Activated CD4-positive, alpha-beta T cell treated with anti-CD3 and anti-CD28 coated beads for 36 hours (primary cell): ENCODE measurements at regions of chr1 and their contacts with region 1.

Region 1: GRCh38 chr1:39196244-39197215 is 8.0 kb upstream of the MACF1 start:
- DNase-seq: peak; percentile 78
- ATAC-seq: peak; percentile 42
- H3K4me3 Mint-ChIP-seq: peak overlapping the region; percentile 54
- H3K27ac Mint-ChIP-seq: peak overlapping the region; percentile 87
- H3K4me1 Mint-ChIP-seq: peaks cover 84% of the 10 kb centered on the region
- H3K27me3 Mint-ChIP-seq: no peaks in the 10 kb centered on the region

Region 2: DNA sequence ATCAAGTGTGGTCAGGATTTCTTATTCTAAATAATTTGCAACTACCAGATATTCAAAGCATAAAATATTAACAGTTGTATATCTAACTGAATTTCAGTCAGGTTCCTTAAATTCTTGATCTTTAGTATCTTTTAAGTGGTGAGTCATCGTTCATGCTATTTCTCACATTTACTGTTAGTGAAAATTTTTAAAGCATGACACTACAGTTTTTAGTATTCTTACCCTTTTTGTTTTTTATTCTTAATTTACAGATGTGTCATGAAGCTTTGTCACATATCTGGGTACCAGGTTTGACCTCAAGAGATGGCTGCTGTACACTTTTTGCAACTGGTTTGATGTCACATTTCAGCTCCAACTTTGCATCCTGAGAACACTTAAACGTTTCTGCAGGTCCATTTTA is 192.7 kb before region 1 on chr1:
- CTCF ChIA-PET with region 1: no interaction called
- POLR2A ChIA-PET with region 1: no interaction called
- intact Hi-C with region 1: loop called in 1 of 2 experiments (anchors 2 kb)
- DNase-seq: no peak
- ATAC-seq: peak; percentile 69
- H3K4me3 Mint-ChIP-seq: no peak overlapping the region
- H3K27ac Mint-ChIP-seq: peak overlapping the region; percentile 57
- H3K4me1 Mint-ChIP-seq: peaks cover 44% of the 10 kb centered on the region
- H3K27me3 Mint-ChIP-seq: no peaks in the 10 kb centered on the region

Region 3: DNA sequence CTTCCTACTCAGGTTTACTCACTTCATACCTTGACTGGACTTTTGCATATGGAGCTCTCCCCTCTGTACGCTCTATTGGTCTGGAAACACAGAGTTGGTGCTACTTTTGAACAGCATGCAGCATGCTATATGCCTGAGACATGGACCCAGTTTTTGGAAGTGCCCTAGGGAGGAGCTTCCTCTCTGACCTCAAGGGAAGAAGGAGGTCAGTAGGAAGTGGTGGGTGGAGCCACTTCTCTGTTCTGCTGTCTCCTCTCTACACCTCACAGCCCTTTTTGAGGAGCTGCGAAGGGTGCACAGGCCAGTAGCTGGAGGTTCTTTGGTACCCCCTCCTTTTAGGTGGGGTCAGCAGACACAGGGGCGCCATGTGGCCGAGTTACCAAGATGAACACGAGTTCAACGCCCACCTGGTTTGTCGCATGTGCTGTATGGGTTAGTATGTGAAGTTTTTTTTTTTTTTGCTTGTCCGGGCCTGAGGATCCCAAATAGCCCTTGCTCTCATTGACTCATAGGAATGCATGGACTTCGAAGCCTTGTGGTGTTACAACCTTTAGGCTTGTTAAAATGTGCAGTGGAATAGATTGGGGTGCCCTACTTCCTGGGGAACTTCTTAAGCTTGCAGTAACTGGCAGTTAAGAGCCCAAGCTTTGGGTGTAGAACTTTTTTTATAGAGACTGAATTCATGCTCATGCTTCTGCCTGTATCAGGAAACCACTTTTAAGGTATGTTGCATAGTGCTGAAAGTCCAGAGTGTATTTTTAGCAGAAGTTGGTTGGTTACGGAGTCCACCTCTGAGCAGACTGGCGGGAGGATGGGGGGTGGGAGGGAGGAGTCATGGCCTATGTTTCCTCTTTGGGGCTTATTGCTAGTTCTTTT is 18.7 kb after region 1 on chr1:
- CTCF ChIA-PET with region 1: interaction called, 75 read pairs
- POLR2A ChIA-PET with region 1: interaction called, 6 read pairs
- intact Hi-C with region 1: no loop called
- DNase-seq: peak; percentile 63
- ATAC-seq: peak; percentile 77
- H3K4me3 Mint-ChIP-seq: peak overlapping the region; percentile 90
- H3K27ac Mint-ChIP-seq: peak overlapping the region; percentile 97
- H3K4me1 Mint-ChIP-seq: peaks cover 53% of the 10 kb centered on the region
- H3K27me3 Mint-ChIP-seq: no peaks in the 10 kb centered on the region

Region 4: GRCh38 chr1:39258146-39258924 is 61.8 kb after region 1 on chr1:
- CTCF ChIA-PET with region 1: interaction called, 174 read pairs
- POLR2A ChIA-PET with region 1: interaction called, 6 read pairs
- intact Hi-C with region 1: loop called (anchors 1 kb)
- DNase-seq: peak; percentile 75
- ATAC-seq: peak; percentile 74
- H3K4me3 Mint-ChIP-seq: no peak overlapping the region
- H3K27ac Mint-ChIP-seq: peak overlapping the region; percentile 51
- H3K4me1 Mint-ChIP-seq: peaks cover 37% of the 10 kb centered on the region
- H3K27me3 Mint-ChIP-seq: no peaks in the 10 kb centered on the region

Region 5: DNA sequence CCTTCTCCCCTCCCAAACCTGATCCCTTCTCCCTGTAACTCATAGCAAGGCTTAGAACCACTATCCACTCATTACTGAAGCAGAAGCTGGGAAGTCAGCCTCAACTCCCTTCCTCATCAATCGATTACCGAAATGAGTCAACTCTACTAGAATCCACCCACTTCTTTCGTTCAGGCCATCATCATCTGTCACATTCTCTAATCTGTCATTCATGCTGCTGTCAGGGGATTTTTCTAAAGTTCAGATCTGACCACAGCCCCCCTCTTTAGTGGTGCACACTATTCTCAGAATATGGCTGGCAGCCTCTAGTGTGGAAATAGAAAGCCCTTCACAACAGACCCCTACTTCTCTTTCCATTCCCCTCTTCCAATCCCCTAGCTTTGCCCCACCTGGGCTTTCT is 470.2 kb after region 1 on chr1:
- CTCF ChIA-PET with region 1: no interaction called
- POLR2A ChIA-PET with region 1: no interaction called
- intact Hi-C with region 1: loop called in 1 of 2 experiments (anchors 2 kb)
- DNase-seq: peak; percentile 64
- ATAC-seq: peak; percentile 86
- H3K4me3 Mint-ChIP-seq: peak overlapping the region; percentile 20
- H3K27ac Mint-ChIP-seq: peak overlapping the region; percentile 77
- H3K4me1 Mint-ChIP-seq: peaks cover 20% of the 10 kb centered on the region
- H3K27me3 Mint-ChIP-seq: peaks cover 26% of the 10 kb centered on the region